MCF 10A (cell line): ENCODE measurements at regions of chr17 and their contacts with region 1.

Region 1: GRCh38 chr17:2511462-2512369 is at the start of gene METTL16:
- DNase-seq: peak; percentile 99
- H3K4me3 Mint-ChIP-seq: no peak within 1 kb of the TSS
- H3K27ac Mint-ChIP-seq: no peak within 1 kb of the TSS
- H3K4me1 Mint-ChIP-seq: peaks cover 11% of the 10 kb centered on the region
- H3K27me3 Mint-ChIP-seq: no peaks in the 10 kb centered on the region
- CTCF ChIP-seq: no peak
- total RNA-seq, gene METTL16: 37.6 and 41.4 TPM in 2 replicates

Region 2: DNA sequence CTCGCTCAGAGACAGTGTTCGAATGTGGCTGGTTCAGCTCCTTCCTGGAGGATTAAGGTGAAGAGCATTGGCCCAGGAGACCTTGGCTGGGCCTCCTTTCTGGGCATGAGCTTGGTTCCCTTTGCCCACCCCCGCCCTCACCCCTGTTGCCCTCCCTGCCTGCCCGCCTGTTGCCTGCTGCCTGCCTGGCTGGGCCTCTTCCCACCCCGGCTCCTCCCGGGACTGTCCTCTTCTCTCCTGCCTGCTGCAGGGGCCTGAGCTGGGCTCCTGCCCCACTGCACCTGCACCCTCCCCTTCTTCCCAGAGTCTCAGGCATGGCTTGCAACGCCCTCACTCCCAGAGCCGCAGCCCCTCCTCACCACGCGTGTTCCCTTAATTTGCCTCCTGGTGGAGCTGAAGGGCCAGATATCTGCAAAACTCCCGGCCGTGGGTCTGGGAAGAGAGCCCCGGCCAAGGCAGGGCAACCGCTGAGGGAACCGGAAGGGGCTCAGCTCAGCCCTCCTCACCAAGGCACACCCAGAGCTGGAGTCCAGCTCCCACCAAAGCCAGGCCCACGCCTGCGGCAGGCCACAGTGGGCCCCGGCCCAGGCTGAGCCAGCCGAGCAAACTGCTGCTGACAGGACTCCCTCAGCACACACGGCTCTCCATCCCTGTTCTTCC is 142.0 kb before region 1 on chr17:
- CTCF ChIA-PET with region 1: no interaction called
- POLR2A ChIA-PET with region 1: no interaction called
- intact Hi-C with region 1: no loop called
- DNase-seq: no peak
- H3K4me3 Mint-ChIP-seq: no peak overlapping the region
- H3K27ac Mint-ChIP-seq: no peak overlapping the region
- H3K4me1 Mint-ChIP-seq: peaks cover 2% of the 10 kb centered on the region
- H3K27me3 Mint-ChIP-seq: no peaks in the 10 kb centered on the region
- CTCF ChIP-seq: peak; percentile 8

Region 3: GRCh38 chr17:2500446-2500845 is 11.3 kb before region 1 on chr17:
- CTCF ChIA-PET with region 1: interaction called, 5 read pairs
- POLR2A ChIA-PET with region 1: interaction called, 10 read pairs
- intact Hi-C with region 1: no loop called
- DNase-seq: no peak
- H3K4me3 Mint-ChIP-seq: no peak overlapping the region
- H3K27ac Mint-ChIP-seq: no peak overlapping the region
- H3K4me1 Mint-ChIP-seq: peaks cover 8% of the 10 kb centered on the region
- H3K27me3 Mint-ChIP-seq: no peaks in the 10 kb centered on the region
- CTCF ChIP-seq: no peak

Region 4: DNA sequence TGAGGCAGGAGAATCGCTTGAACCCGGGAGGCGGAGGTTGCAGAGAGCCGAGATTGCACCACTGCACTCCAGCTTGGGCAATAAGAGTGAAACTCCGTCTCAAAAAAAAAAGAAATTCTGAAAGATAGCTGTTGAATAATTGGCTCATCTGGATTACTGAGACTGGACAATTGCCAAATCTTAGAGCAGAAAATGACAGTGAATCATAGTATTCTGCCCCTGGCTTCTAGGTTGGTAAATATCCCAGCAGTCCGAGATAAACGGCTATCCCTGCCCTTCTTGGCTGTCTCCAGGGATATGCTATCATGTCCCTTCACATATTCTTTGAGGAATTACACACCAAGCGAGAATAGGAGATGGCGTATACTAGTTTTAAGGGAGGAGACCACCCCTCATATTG is 35.5 kb after region 1 on chr17:
- CTCF ChIA-PET with region 1: interaction called, 4 read pairs
- POLR2A ChIA-PET with region 1: interaction called, 10 read pairs
- intact Hi-C with region 1: no loop called
- DNase-seq: peak; percentile 87
- H3K4me3 Mint-ChIP-seq: no peak overlapping the region
- H3K27ac Mint-ChIP-seq: no peak overlapping the region
- H3K4me1 Mint-ChIP-seq: peaks cover 5% of the 10 kb centered on the region
- H3K27me3 Mint-ChIP-seq: no peaks in the 10 kb centered on the region
- CTCF ChIP-seq: no peak

Region 5: GRCh38 chr17:2592971-2593820 is 81.5 kb after region 1 on chr17 and contains the start of gene PAFAH1B1:
- CTCF ChIA-PET with region 1: interaction called, 9 read pairs
- POLR2A ChIA-PET with region 1: interaction called, 72 read pairs
- intact Hi-C with region 1: loop called (anchors 2 kb)
- DNase-seq: peak; percentile 93
- H3K4me3 Mint-ChIP-seq: peak within 1 kb of the TSS; percentile 98
- H3K27ac Mint-ChIP-seq: peak within 1 kb of the TSS; percentile 96
- H3K4me1 Mint-ChIP-seq: peaks cover 14% of the 10 kb centered on the region
- H3K27me3 Mint-ChIP-seq: no peaks in the 10 kb centered on the region
- CTCF ChIP-seq: peak; percentile 7
- total RNA-seq, gene PAFAH1B1: 170 and 192 TPM in 2 replicates

Region 6: GRCh38 chr17:2711601-2712299 is 200.0 kb after region 1 on chr17 and contains the start of gene CLUH:
- CTCF ChIA-PET with region 1: interaction called, 3 read pairs
- POLR2A ChIA-PET with region 1: interaction called, 15 read pairs
- intact Hi-C with region 1: no loop called
- DNase-seq: peak; percentile 98
- H3K4me3 Mint-ChIP-seq: peak within 1 kb of the TSS; percentile 92
- H3K27ac Mint-ChIP-seq: peak within 1 kb of the TSS; percentile 94
- H3K4me1 Mint-ChIP-seq: peaks cover 29% of the 10 kb centered on the region
- H3K27me3 Mint-ChIP-seq: no peaks in the 10 kb centered on the region
- CTCF ChIP-seq: no peak
- total RNA-seq, gene CLUH: 66.6 and 80.4 TPM in 2 replicates